Heart right ventricle (tissue), 16 donors: ENCODE measurements at regions of chr11 and their contacts with region 1.

Region 1: DNA sequence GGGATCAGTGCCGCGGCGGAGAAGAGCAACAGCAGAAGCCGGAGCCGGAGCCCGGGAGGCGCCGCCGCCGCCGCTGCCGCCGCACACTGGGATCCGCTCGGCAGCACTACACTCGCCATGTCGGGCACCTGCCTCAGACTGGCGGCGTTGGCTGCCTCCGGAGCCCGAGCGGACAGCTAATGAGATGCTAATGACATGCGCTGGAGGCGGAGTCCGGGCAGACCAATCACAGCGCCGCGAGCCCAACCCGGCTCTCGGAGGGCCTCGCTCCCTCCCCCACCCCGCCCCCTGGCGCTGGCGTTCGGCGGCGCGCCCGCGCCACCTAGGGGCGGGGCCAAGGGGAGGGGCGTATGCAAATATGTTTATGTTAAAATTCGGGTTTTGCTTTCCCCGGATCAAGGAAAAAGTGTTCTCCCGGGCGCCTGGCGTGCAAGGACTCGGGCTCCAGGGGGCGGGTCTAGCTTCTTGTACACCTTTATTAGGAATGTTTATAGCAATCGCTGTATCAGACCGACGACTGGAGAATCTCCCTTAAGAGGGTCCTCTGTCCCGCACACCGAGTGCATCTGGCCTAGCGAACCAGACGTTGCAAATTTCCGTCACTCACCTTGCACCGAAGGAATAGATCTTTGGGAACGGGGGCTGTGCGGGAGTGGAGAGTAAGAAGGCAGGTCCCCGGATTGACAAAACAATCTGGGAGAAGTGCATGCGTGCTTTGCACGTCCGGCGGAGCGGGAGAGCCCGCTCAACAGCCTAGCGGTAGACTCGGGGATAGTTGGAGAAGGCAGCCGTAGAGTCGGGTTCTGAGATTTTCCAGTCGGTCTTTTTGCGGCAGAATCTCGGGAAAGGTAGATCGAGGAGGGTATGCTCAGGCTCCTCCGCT is at the start of gene CADM1:
- DNase-seq: peak; percentile 92 to 94
- ATAC-seq: peak; percentile 95 to 97 (median 96)
- H3K4me3 ChIP-seq: peak within 1 kb of the TSS; percentile 36 to 77 (median 65)
- H3K27ac ChIP-seq: peak within 1 kb of the TSS; percentile 73 to 90 (median 81)
- H3K4me1 ChIP-seq: peaks cover 0 to 44% (median 18%) of the 10 kb centered on the region in 9 donors
- H3K27me3 ChIP-seq: peaks cover 0 to 86% (median 21%) of the 10 kb centered on the region in 7 donors
- CTCF ChIP-seq: peak; percentile 50 to 78 (median 71)
- total RNA-seq, gene CADM1: 28.0 to 83.0 (median 42.4) TPM

Region 2: DNA sequence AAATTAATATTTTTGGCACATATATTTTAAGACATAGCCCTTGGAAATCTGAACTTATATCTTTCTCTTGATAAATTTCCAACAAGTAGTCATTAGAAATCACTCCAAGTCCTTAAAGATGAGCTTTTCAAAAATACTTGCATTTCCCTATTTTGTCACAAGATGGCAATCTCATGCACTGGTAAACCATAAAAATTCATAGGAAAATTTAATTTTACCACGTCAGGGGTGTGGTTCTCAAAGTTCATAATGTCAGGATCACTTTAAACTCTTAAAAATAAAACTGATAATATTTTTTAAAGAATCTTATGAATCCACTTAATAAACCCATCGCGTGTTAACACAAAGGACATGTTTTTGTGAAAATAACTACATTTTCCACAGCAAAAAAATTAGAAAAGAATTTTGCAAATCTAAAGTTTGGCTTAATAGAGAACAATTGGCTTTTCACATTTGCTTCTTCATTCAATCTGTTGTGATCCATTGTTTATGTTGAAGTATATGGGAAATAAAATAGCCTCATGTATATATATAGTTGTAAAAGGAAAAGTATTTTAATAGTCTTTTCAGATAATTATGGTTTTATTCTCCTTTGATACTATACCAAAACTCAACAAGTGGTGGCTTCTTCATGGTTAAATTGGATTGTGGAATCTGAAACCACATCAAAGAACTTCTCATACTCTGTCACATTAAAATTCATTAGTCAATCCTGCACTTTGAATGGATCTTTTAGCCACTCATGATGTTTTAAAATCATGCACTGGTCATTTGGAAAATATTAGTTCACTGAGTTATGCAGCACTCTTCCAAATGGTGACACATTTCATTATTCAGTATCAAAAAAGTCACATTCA is 169.4 kb before region 1 on chr11:
- intact Hi-C with region 1: loop called in 9 of 10 experiments (anchors 1 to 5 kb)
- DNase-seq: no peak
- ATAC-seq: no peak
- H3K4me3 ChIP-seq: no peak overlapping the region
- H3K27ac ChIP-seq: no peak overlapping the region
- H3K4me1 ChIP-seq: peaks cover 0 to 6% (median 0%) of the 10 kb centered on the region in 9 donors
- H3K27me3 ChIP-seq: no peaks in the 10 kb centered on the region
- CTCF ChIP-seq: peak; percentile 52 to 81 (median 76)

Region 3: GRCh38 chr11:115446214-115446613 is 58.3 kb before region 1 on chr11:
- intact Hi-C with region 1: loop called in 2 of 10 experiments (anchors 5 to 10 kb)
- DNase-seq: peak in 1 of 2 donors; percentile 10
- ATAC-seq: peak in 4 of 8 donors; percentile 23 to 65 (median 52)
- H3K4me3 ChIP-seq: no peak overlapping the region
- H3K27ac ChIP-seq: no peak overlapping the region
- H3K4me1 ChIP-seq: peaks cover 0 to 8% (median 0%) of the 10 kb centered on the region in 9 donors
- H3K27me3 ChIP-seq: no peaks in the 10 kb centered on the region
- CTCF ChIP-seq: no peak

Region 4: GRCh38 chr11:115623021-115623451 is 118.5 kb after region 1 on chr11:
- intact Hi-C with region 1: loop called in 2 of 10 experiments (anchors 10 kb)
- DNase-seq: peak; percentile 74 to 90
- ATAC-seq: peak; percentile 92 to 98 (median 96)
- H3K4me3 ChIP-seq: no peak overlapping the region
- H3K27ac ChIP-seq: peak overlapping the region in 9 of 10 donors; percentile 27 to 93 (median 82)
- H3K4me1 ChIP-seq: peaks cover 6 to 28% (median 18%) of the 10 kb centered on the region in 9 donors
- H3K27me3 ChIP-seq: peaks cover 0 to 4% (median 0%) of the 10 kb centered on the region in 7 donors
- CTCF ChIP-seq: no peak

Region 5: DNA sequence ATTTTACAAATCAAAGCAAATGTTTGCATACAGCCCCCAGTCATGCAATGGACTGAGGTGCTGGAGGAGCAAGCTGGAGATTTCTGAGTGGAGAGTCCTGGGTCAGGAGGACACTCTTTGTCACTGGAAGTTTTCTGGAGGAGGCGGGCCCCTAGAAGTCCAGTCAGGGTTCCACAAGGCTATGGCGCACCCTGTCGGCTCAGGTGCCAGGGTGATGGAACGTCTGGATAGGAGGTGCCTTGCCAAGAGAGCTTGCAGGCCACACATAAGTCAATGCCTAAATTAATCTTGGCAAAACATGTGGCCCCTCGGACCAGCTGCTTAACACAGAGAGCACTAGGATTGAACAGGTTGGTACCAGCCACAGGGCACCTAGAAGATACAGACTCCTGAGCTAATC is 174.4 kb after region 1 on chr11:
- intact Hi-C with region 1: loop called in 6 of 10 experiments (anchors 5 to 10 kb)
- DNase-seq: peak; percentile 25 to 33
- ATAC-seq: peak; percentile 70 to 89 (median 77)
- H3K4me3 ChIP-seq: no peak overlapping the region
- H3K27ac ChIP-seq: no peak overlapping the region
- H3K4me1 ChIP-seq: peaks cover 0 to 13% (median 0%) of the 10 kb centered on the region in 9 donors
- H3K27me3 ChIP-seq: peaks cover 0 to 4% (median 0%) of the 10 kb centered on the region in 7 donors
- CTCF ChIP-seq: peak in 7 of 9 donors; percentile 14 to 47 (median 34)

Region 6: DNA sequence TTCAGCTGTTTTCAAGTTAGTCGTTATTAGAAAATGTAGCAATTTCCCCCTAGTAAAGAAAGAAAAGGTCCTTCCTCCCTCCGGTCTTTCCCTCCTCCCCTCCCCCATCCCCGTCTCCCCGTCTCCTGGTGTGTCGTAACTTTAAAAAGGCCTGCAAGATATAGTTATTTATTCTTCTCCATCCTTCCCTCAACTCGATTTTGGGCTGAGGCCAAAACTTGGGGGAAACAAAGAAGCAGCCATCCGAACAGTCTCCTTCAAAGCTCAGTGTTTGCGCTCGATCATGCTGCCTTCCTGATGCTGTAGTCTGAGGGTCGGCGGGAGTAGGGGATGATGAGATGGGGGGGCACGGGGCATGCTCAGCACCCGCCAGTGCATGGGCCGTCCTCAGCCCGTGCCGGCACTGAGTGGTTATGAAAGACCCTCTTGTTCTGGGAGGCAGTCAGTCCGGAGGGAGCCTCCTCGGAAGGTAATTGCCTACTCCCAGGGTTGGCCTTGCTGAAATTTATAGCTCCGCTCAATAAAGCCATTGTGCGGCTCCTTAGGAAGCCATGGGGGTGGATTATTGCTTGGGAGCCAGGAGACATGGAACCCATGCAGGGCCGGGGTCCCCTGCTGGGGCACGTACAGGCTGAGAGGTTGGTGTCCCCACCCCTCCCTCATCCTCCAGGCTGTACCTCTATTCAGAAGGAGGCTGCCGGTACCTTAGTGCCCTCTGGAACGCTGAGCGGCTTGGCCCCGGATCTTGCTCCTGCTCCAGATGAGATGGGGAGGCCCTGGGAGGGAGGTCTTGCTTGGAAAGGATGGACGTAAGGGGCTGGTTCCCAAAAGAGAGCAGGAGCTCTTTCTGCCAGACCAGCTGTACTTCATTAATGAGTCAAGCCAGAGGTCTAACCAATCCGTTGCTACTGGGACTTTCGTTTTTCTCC is 212.3 kb after region 1 on chr11:
- intact Hi-C with region 1: no loop called
- DNase-seq: peak in 1 of 2 donors; percentile 28
- ATAC-seq: peak; percentile 42 to 75 (median 64)
- H3K4me3 ChIP-seq: peak overlapping the region in 8 of 10 donors; percentile 11 to 45 (median 42)
- H3K27ac ChIP-seq: peak overlapping the region in 4 of 10 donors; percentile 27 to 52 (median 40)
- H3K4me1 ChIP-seq: peaks cover 0 to 20% (median 0%) of the 10 kb centered on the region in 9 donors
- H3K27me3 ChIP-seq: peaks cover 0 to 6% (median 0%) of the 10 kb centered on the region in 7 donors
- CTCF ChIP-seq: no peak